ENCODE measurements at regions of chr6 and their contacts with region 1.

Region 1: DNA sequence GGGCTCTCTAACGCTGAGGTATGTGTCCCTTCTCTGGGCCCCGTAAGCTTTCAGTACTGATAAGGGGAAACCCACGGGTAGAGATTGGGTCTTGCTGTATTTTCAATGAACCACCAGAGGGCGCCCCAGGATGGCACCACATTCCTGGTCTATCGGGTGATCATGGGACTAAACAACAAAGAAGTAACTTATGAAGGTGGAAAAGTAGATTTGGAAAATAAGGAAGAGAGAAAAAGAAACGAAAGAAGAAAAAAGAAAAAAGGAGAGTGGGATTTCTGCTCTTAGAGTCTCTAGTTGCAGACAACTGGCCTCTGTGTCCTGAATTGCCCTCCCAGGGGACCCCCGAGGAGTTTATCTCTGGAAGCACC is 93.8 kb downstream of the GMPR start:
- DNase-seq: peak; percentile 73 to 83
- ATAC-seq: peak; percentile 70 to 84 (median 72)
- H3K4me3 ChIP-seq: no peak overlapping the region
- H3K27ac ChIP-seq: peak overlapping the region; percentile 83
- H3K4me1 ChIP-seq: peaks cover 54% of the 10 kb centered on the region
- H3K27me3 ChIP-seq: no peaks in the 10 kb centered on the region
- CTCF ChIP-seq: peak; percentile 94

Region 2: DNA sequence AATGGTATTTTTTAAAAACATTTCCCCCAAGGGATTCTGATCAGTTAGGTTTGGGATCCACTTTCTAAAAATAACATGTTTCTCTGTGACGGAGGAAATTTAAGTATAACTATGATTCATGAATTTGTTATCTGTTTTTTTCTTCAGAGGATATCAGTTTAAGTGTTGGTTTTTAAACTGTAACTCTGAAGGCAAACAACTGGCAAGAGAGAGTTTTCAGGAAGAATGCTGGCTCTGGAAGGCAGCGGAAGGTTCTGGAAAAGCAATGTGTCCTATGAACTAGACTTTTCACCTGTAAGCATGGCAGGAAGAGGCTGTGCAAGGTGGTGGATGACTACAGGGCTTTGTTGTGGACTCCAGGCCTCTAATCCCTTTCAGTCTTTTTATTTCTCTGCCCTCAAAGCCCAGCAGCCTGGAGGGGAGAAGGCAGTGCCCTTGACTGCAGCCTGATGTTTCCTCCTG is 59.3 kb after region 1 on chr6:
- intact Hi-C with region 1: loop called in 1 of 2 experiments (anchors 5 kb)
- DNase-seq: no peak
- ATAC-seq: peak in 2 of 4 donors; percentile 25 to 75
- H3K4me3 ChIP-seq: no peak overlapping the region
- H3K27ac ChIP-seq: peak overlapping the region; percentile 66
- H3K4me1 ChIP-seq: peaks cover 16% of the 10 kb centered on the region
- H3K27me3 ChIP-seq: no peaks in the 10 kb centered on the region
- CTCF ChIP-seq: no peak

Region 3: GRCh38 chr6:16409531-16410441 is 77.6 kb after region 1 on chr6:
- intact Hi-C with region 1: loop called (anchors 1 to 5 kb)
- DNase-seq: peak; percentile 47 to 70
- ATAC-seq: peak; percentile 57 to 90 (median 84)
- H3K4me3 ChIP-seq: no peak overlapping the region
- H3K27ac ChIP-seq: no peak overlapping the region
- H3K4me1 ChIP-seq: peaks cover 7% of the 10 kb centered on the region
- H3K27me3 ChIP-seq: no peaks in the 10 kb centered on the region
- CTCF ChIP-seq: peak; percentile 70

Region 4: GRCh38 chr6:16670183-16670582 is 338.0 kb after region 1 on chr6:
- intact Hi-C with region 1: loop called in 1 of 2 experiments (anchors 10 kb)
- DNase-seq: peak; percentile 20 to 58
- ATAC-seq: peak; percentile 23 to 67 (median 58)
- H3K4me3 ChIP-seq: no peak overlapping the region
- H3K27ac ChIP-seq: no peak overlapping the region
- H3K4me1 ChIP-seq: peaks cover 42% of the 10 kb centered on the region
- H3K27me3 ChIP-seq: no peaks in the 10 kb centered on the region
- CTCF ChIP-seq: no peak

Region 5: GRCh38 chr6:16761471-16762267 is 429.5 kb after region 1 on chr6:
- intact Hi-C with region 1: loop called (anchors 5 kb)
- DNase-seq: peak; percentile 82 to 93
- ATAC-seq: peak; percentile 63 to 71 (median 69)
- H3K4me3 ChIP-seq: peak overlapping the region; percentile 94
- H3K27ac ChIP-seq: peak overlapping the region; percentile 99
- H3K4me1 ChIP-seq: peaks cover 41% of the 10 kb centered on the region
- H3K27me3 ChIP-seq: no peaks in the 10 kb centered on the region
- CTCF ChIP-seq: peak; percentile 10

Region 6: GRCh38 chr6:16803294-16804200 is 471.4 kb after region 1 on chr6:
- intact Hi-C with region 1: no loop called
- DNase-seq: peak in 1 of 2 donors; percentile 17
- ATAC-seq: peak in 2 of 4 donors; percentile 14 to 22
- H3K4me3 ChIP-seq: no peak overlapping the region
- H3K27ac ChIP-seq: no peak overlapping the region
- H3K4me1 ChIP-seq: peaks cover 24% of the 10 kb centered on the region
- H3K27me3 ChIP-seq: no peaks in the 10 kb centered on the region
- CTCF ChIP-seq: no peak

Region 7: GRCh38 chr6:16964553-16965501 is 632.7 kb after region 1 on chr6:
- intact Hi-C with region 1: loop called in 1 of 2 experiments (anchors 10 kb)
- DNase-seq: peak; percentile 62 to 81
- ATAC-seq: peak; percentile 85 to 98 (median 96)
- H3K4me3 ChIP-seq: peak overlapping the region; percentile 11
- H3K27ac ChIP-seq: no peak overlapping the region
- H3K4me1 ChIP-seq: peaks cover 6% of the 10 kb centered on the region
- H3K27me3 ChIP-seq: peaks cover 0 to 3% (median 0%) of the 10 kb centered on the region in 3 donors
- CTCF ChIP-seq: peak; percentile 91